Panc1 (cell line): ENCODE measurements at regions of chr19 and their contacts with region 1.

Region 1: DNA sequence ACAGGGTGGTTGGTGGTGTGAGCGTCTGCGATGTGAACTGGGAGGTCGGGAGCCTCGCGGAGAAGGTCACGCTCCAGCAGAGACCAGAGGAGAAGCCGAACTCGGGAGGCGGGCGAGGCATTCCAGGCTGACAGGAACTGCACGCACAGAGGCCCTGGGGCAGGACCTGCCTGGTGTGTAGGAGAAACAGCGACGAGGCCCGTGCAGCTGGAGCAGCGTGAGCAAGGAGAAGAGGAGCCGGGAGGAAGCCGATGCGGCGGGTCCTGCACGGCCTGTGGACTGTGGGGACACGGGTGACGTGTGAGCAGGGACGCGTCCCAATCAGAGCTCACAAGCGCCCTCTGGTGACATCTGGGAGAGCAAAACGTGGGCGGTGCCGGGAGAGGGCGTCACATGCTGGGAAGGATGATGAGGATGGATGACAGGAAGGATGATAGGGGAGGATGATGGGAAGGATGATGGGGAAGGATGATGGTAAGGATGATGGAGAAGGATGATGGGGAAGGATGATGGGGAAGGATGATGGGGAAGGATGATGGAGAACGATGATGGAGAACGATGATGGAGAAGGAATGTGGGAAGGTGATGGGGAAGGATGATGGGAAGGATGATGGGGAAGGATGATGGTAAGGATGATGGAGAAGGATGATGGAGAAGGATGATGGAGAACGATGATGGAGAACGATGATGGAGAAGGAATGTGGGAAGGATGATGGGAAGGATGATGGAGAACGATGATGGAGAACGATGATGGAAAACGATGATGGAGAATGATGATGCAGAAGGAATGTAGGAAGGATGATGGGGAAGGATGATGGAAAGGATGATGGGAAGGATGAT is 16.1 kb upstream of the MADCAM1 start:
- DNase-seq: no peak
- ATAC-seq: peak; percentile 57; the same call in 1 of the 2 replicates
- H3K4me3 ChIP-seq: no peak overlapping the region
- H3K27ac ChIP-seq: no peak overlapping the region
- H3K4me1 ChIP-seq: peaks cover 2% of the 10 kb centered on the region; the same call in 1 of the 2 replicates
- H3K27me3 ChIP-seq: no peaks in the 10 kb centered on the region
- CTCF ChIP-seq: peak; percentile 73

Region 2: GRCh38 chr19:461664-462551 is 18.3 kb before region 1 on chr19:
- CTCF ChIA-PET with region 1: interaction called, 13 read pairs
- POLR2A ChIA-PET with region 1: no interaction called
- in situ Hi-C with region 1: no loop called
- intact Hi-C with region 1: no loop called
- DNase-seq: no peak
- ATAC-seq: peak; percentile 60
- H3K4me3 ChIP-seq: peak overlapping the region; percentile 18 to 42
- H3K27ac ChIP-seq: no peak overlapping the region
- H3K4me1 ChIP-seq: no peaks in the 10 kb centered on the region
- H3K27me3 ChIP-seq: no peaks in the 10 kb centered on the region
- CTCF ChIP-seq: no peak

Region 3: DNA sequence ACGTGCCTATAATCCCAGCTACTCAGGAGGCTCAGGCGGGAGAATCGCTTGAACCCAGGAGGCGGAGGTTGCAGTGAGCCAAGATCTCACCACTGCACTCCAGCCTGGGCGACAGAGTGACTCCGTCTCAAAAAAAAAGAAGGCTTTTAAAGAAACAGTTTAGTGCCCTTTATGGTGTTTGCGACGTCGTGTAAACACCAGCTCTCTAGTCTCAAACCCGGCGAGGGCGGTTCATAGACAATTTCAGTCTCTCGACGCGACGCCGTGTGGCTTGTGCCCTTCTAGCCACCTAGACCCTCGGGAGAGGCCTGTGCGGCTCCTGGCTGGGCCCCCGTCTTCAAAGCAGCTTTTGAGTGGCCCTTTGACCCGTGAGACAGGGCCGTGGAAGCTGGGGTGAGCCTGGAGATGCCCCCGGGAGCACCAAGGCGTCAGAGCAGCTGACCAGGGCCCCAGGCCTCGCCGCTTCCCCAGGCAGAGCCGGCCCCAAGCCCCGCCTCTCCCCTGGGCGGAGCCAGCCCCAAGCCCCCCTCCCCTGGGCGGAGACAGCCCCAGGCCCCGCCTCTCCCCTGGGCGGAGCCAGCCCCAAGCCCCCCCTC is 11.0 kb after region 1 on chr19:
- CTCF ChIA-PET with region 1: interaction called, 11 read pairs
- POLR2A ChIA-PET with region 1: no interaction called
- in situ Hi-C with region 1: no loop called
- intact Hi-C with region 1: no loop called
- DNase-seq: no peak
- ATAC-seq: no peak
- H3K4me3 ChIP-seq: peak overlapping the region; percentile 29 to 67
- H3K27ac ChIP-seq: peak overlapping the region; percentile 78
- H3K4me1 ChIP-seq: peaks cover 16% of the 10 kb centered on the region
- H3K27me3 ChIP-seq: no peaks in the 10 kb centered on the region
- CTCF ChIP-seq: no peak

Region 4: GRCh38 chr19:1632462-1633268 is 1152.4 kb after region 1 on chr19:
- CTCF ChIA-PET with region 1: no interaction called
- POLR2A ChIA-PET with region 1: no interaction called
- in situ Hi-C with region 1: no loop called
- intact Hi-C with region 1: no loop called
- DNase-seq: no peak
- ATAC-seq: 0 out of 2 replicates have a peak, but pooled peaks have one; percentile 8
- H3K4me3 ChIP-seq: no peak overlapping the region
- H3K27ac ChIP-seq: no peak overlapping the region
- H3K4me1 ChIP-seq: no peaks in the 10 kb centered on the region
- H3K27me3 ChIP-seq: no peaks in the 10 kb centered on the region
- CTCF ChIP-seq: no peak